ENCODE measurements at regions of chr2 and their contacts with region 1.

Region 1: DNA sequence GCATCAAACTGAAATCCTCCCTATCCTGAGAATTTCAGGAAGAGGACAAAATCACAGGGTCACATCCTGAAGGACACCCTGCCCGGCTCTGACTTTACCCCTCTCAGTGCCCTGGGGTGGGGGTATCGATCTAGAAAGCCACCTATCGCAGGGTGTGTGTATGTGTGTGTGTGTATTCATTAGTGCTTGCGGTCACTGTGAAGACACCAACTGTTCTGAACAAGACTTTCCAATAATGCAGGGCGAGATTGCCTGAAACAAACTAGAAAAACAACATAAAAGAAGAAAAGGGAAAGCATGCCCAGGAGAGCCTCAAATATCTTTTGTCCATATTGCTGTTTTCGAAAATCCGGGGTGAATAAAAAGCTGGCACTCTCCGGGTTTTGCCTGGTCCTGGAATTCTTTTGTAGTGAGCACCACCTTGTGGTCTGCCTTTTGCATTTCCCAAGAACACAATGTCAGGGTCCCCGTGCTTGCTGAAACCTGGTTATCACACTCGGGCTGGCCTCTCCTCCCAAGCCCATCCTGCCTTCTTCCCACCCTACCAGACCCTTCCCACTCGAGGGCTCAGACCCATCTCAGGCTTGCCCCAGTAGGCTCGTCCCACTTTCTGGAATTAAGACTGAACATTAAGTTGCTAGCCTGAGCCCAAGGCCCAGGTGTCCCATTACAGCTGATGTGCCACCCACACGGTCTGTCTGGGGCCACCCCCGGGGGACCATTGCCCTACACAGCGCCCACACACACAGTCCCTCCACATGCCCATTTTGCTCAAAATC is 25.0 kb upstream of the COPS8 start:
- DNase-seq: peak; percentile 6 to 32 (median 21)
- H3K4me3 ChIP-seq: no peak overlapping the region
- H3K4me3 Mint-ChIP-seq: peak overlapping the region in 1 of 2 donors; percentile 14
- H3K27ac ChIP-seq: no peak overlapping the region
- H3K27ac Mint-ChIP-seq: no peak overlapping the region
- H3K4me1 ChIP-seq: peaks cover 0 to 3% of the 10 kb centered on the region in 2 donors
- H3K4me1 Mint-ChIP-seq: peaks cover 8% of the 10 kb centered on the region
- H3K27me3 ChIP-seq: no peaks in the 10 kb centered on the region
- H3K27me3 Mint-ChIP-seq: peaks cover 0 to 4% (median 3%) of the 10 kb centered on the region in 3 donors
- CTCF ChIP-seq: peak; percentile 50

Region 2: DNA sequence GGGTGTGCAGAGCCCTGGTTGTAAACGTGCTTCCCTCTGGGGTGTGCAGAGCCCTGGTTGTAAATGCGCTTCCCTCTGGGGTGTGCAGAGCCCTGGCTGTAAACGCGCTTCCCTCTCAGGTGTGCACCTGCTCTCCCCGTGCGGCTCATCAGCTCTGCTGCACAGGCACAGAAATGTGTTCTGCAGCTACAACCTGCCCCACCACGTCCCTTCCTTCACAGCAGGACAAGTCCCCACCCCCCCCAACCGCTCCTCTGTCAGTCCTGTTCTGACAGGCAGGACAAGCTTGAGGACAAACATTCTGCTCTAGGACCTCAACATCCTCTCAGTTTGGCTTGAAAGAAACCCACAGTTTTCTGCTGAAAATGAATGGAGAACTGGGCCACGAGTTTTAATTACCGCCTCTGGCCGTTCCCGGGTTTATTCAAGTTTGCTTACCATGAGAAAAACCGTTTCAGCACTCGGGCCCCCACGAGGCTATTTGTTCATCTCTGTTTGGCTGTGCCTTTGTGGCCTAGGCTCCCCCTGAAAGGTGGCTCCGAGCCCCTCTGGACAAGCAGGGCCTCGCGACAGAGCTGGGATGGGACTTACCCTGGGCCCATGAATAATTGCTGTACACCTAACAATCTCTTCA is 715.5 kb before region 1 on chr2:
- intact Hi-C with region 1: loop called in 1 of 2 experiments (anchors 5 kb)
- DNase-seq: no peak
- H3K4me3 ChIP-seq: no peak overlapping the region
- H3K4me3 Mint-ChIP-seq: no peak overlapping the region
- H3K27ac ChIP-seq: no peak overlapping the region
- H3K27ac Mint-ChIP-seq: no peak overlapping the region
- H3K4me1 ChIP-seq: no peaks in the 10 kb centered on the region
- H3K4me1 Mint-ChIP-seq: no peaks in the 10 kb centered on the region
- H3K27me3 ChIP-seq: no peaks in the 10 kb centered on the region
- H3K27me3 Mint-ChIP-seq: peaks cover 1 to 13% (median 7%) of the 10 kb centered on the region in 3 donors
- CTCF ChIP-seq: no peak

Region 3: DNA sequence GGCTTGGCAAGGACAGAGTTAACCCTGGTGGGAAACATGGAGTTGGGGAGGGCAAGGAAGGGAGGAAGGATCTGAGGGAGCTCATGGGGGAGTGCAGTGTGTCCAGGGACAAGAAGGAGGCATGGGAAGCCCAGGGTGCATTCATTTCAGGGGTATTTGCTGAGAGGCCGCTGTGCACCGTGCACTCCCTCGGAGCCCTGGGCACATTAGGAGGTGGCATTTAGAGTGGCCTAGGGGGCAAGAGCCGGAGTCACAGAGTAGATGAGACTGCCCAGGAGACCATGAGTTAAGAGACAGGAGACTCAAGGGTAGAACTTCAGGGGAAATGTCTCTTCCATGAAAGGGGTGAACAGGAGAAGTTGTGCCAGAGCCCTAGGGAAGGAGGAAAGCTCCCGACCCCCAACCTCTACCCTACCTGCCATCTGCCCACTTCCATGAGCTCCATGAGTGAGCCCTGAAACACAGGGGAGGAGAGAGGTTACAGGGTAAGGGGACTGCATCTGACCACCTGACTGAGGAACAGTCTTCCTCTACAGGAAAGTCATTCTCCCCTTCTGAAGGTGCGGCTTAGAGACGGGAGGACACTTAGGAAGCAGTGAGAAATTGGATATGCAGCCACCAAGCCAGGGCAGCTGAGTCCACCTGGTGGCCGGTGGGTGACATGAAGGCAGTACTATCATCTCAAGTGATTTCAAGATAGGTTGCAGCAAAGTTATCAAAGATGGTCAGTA is 33.6 kb before region 1 on chr2:
- intact Hi-C with region 1: no loop called
- DNase-seq: peak; percentile 32 to 62 (median 52)
- H3K4me3 ChIP-seq: no peak overlapping the region
- H3K4me3 Mint-ChIP-seq: no peak overlapping the region
- H3K27ac ChIP-seq: no peak overlapping the region
- H3K27ac Mint-ChIP-seq: no peak overlapping the region
- H3K4me1 ChIP-seq: no peaks in the 10 kb centered on the region
- H3K4me1 Mint-ChIP-seq: no peaks in the 10 kb centered on the region
- H3K27me3 ChIP-seq: no peaks in the 10 kb centered on the region
- H3K27me3 Mint-ChIP-seq: peaks cover 6 to 10% (median 9%) of the 10 kb centered on the region in 3 donors
- CTCF ChIP-seq: peak; percentile 76